AG04449 (cell line): ENCODE measurements at regions of chr14 and their contacts with region 1.

Region 1: GRCh38 chr14:34781242-34781641 is 66.8 kb upstream of the CFL2 start:
- DNase-seq: peak; percentile 58
- H3K4me3 ChIP-seq: no peak overlapping the region
- CTCF ChIP-seq: no peak

Region 2: GRCh38 chr14:34766060-34766459 is 15.2 kb before region 1 on chr14:
- CTCF ChIA-PET with region 1: interaction called, 11 read pairs
- POLR2A ChIA-PET with region 1: no interaction called
- DNase-seq: no peak
- H3K4me3 ChIP-seq: no peak overlapping the region
- CTCF ChIP-seq: no peak